Naive thymus-derived CD8-positive, alpha-beta T cell (primary cell): ENCODE measurements at regions of chr11 and their contacts with region 1.

Region 1: GRCh38 chr11:65546217-65546958 is 11.8 kb downstream of the LTBP3 start:
- DNase-seq: peak; percentile 95 to 100 (median 98)
- ATAC-seq: peak; percentile 82
- H3K4me3 Mint-ChIP-seq: peak overlapping the region; percentile 77 to 89 (median 83)
- H3K27ac Mint-ChIP-seq: peak overlapping the region; percentile 53 to 99 (median 96)
- H3K4me1 Mint-ChIP-seq: peaks cover 32 to 75% (median 64%) of the 10 kb centered on the region in 4 donors
- H3K27me3 Mint-ChIP-seq: no peaks in the 10 kb centered on the region

Region 2: DNA sequence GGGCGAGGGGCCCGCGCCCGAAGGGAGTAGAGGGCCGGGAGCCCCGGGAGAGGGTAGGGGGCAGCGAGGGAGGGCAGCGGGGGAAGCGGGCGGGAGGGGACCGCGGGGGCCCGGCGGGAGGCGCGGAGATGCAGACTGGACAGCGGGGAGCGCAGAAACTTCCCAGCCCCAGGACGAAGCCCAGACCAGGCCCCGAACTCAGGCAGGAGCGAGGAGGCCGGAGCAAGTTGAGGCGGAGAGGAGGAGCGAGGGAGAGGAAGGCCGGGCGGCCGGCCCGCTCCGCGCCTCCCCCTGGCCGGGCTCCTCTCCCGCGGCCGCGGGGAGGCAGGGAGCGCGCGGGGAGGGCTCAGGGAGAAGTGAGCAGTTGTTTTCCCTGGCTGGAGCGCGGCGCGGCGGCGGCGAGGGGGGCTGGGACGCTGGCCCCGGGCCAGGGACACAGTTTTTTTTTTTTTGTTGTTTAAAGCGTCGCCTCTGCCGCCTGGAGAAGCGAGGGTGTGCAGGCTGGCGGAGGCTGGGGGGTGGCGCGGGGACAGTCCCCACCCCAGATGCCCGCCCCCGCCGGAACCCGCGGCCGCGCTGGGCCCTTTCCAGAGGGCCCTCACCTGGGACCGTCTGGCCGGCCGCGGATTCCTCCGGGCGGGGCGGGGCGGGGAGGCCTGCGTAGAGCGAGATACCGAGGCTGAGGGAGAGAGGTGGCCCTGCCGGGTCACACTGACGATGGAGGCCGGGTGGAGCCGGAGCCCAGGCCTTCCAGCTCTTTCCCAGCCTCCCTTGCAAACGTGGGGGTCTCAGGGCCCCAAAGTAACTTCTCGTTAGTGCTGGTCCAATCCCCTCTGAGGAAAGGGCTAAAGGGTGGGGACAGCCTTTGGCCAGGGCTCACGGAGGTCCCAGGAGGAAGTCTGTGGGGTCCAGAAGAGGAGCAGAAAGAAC is 11.9 kb after region 1 on chr11 and contains the start of gene LTBP3:
- POLR2A ChIA-PET with region 1: interaction called, 149 read pairs
- DNase-seq: peak in 6 of 10 donors; percentile 45 to 54 (median 50)
- ATAC-seq: peak; percentile 46 to 56
- H3K4me3 Mint-ChIP-seq: peak within 1 kb of the TSS; percentile 82 to 95 (median 91)
- H3K27ac Mint-ChIP-seq: peak within 1 kb of the TSS; percentile 88 to 98 (median 94)
- H3K4me1 Mint-ChIP-seq: peaks cover 37 to 66% (median 60%) of the 10 kb centered on the region in 4 donors
- H3K27me3 Mint-ChIP-seq: no peaks in the 10 kb centered on the region
- polyA plus RNA-seq, gene LTBP3: 7.3 to 35.0 (median 18.9) TPM

Region 3: DNA sequence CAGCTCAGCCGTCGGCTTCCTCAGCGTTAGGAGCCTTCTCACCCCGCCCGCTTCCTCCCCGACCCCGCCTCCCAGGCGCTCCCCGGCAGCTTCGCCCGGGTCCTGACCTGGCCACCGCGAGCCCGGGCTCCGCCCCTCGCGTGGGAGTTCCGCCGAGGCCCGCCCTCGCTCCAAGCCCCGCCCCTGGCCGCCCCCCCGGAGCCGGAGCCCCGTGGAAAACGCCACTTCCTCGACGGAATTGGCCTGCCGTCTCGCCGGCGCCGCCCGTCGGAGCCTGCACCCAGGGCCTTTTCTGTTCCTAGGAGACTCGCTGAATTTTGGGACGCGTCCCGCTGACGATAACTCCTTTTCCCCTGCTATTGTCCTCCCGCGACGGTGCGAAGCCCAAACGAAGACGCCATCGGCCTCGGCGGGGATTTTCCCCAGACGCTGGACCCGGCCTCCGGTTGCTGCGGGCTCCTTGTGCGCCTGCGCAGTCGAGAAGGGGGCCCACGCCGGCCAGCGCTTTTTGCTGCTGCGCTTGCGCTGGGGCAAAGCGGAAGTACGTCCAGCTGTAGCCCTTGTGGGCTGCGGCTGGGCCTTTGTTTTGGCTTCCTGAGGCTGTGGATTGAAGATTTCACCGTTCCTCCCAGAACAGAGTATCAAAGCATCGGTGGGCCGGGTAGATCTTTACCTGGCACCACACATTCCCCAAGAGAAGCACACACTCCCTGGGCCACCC is 106.3 kb after region 1 on chr11:
- POLR2A ChIA-PET with region 1: no interaction called
- DNase-seq: peak; percentile 92 to 99 (median 96)
- ATAC-seq: peak; percentile 77 to 81
- H3K4me3 Mint-ChIP-seq: peak overlapping the region; percentile 73 to 95 (median 91)
- H3K27ac Mint-ChIP-seq: peak overlapping the region; percentile 96 to 99 (median 98)
- H3K4me1 Mint-ChIP-seq: peaks cover 38 to 66% (median 52%) of the 10 kb centered on the region in 4 donors
- H3K27me3 Mint-ChIP-seq: peaks cover 0 to 2% (median 0%) of the 10 kb centered on the region in 5 donors